Activated CD8-positive, alpha-beta T cell treated with anti-CD3 and anti-CD28 coated beads for 36 hours (primary cell): ENCODE measurements at regions of chr14 and their contacts with region 1.

Region 1: GRCh38 chr14:61360796-61361525 is 39.6 kb downstream of the PRKCH start:
- DNase-seq: peak; percentile 61
- ATAC-seq: peak; percentile 60
- H3K4me3 Mint-ChIP-seq: peak overlapping the region; percentile 20
- H3K27ac Mint-ChIP-seq: peak overlapping the region; percentile 83
- H3K4me1 Mint-ChIP-seq: peaks cover 52% of the 10 kb centered on the region
- H3K27me3 Mint-ChIP-seq: no peaks in the 10 kb centered on the region
- CTCF ChIP-seq: no peak

Region 2: GRCh38 chr14:61308198-61308597 is 52.8 kb before region 1 on chr14:
- CTCF ChIA-PET with region 1: no interaction called
- POLR2A ChIA-PET with region 1: no interaction called
- intact Hi-C with region 1: no loop called
- DNase-seq: no peak
- ATAC-seq: no peak
- H3K4me3 Mint-ChIP-seq: no peak overlapping the region
- H3K27ac Mint-ChIP-seq: no peak overlapping the region
- H3K4me1 Mint-ChIP-seq: peaks cover 20% of the 10 kb centered on the region
- H3K27me3 Mint-ChIP-seq: no peaks in the 10 kb centered on the region
- CTCF ChIP-seq: no peak

Region 3: GRCh38 chr14:61347826-61348443 is 13.0 kb before region 1 on chr14:
- CTCF ChIA-PET with region 1: interaction called, 11 read pairs
- POLR2A ChIA-PET with region 1: interaction called, 16 read pairs
- intact Hi-C with region 1: no loop called
- DNase-seq: peak; percentile 66
- ATAC-seq: peak; percentile 21
- H3K4me3 Mint-ChIP-seq: peak overlapping the region; percentile 80
- H3K27ac Mint-ChIP-seq: peak overlapping the region; percentile 98
- H3K4me1 Mint-ChIP-seq: peaks cover 96% of the 10 kb centered on the region
- H3K27me3 Mint-ChIP-seq: no peaks in the 10 kb centered on the region
- CTCF ChIP-seq: no peak

Region 4: GRCh38 chr14:61381547-61381946 is 20.6 kb after region 1 on chr14:
- CTCF ChIA-PET with region 1: interaction called, 10 read pairs
- POLR2A ChIA-PET with region 1: interaction called, 39 read pairs
- intact Hi-C with region 1: loop called (anchors 2 kb)
- DNase-seq: peak; percentile 37
- ATAC-seq: no peak
- H3K4me3 Mint-ChIP-seq: peak overlapping the region; percentile 54
- H3K27ac Mint-ChIP-seq: peak overlapping the region; percentile 83
- H3K4me1 Mint-ChIP-seq: peaks cover 64% of the 10 kb centered on the region
- H3K27me3 Mint-ChIP-seq: no peaks in the 10 kb centered on the region
- CTCF ChIP-seq: no peak

Region 5: DNA sequence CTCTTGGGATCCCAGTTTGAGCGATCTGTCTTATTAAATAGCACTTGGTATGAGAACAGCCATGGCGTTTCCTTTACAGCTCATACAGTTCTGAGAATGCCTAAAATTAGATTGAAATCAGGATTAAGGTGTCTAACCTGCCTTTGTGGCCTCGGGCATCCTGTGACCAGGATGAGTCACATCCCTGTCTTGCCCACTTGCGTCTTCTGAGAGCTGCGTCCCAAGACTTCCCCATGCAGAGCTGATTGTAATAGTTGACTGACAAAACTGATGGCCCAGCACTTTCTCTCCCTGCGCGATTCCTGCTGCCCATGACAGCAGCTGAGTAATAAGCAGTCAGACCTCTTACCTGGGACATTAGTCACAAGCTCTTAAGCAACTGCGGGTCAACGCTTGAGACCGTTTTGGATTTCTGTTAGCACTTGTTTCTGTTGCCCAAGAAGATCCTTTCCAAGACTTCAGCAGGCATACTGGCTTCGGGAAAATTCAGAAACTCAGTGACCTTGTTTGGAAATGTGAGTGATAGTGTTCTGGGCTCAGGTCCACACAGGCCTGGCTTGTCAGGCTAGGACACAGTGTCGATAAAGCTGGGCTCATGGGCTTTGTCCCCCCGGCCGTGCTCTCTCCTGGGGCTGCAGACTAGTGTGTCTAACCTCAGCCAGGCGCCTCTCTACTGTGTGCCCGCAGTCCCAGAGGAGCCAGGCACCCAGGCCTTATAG is 164.5 kb after region 1 on chr14:
- CTCF ChIA-PET with region 1: no interaction called
- POLR2A ChIA-PET with region 1: no interaction called
- intact Hi-C with region 1: no loop called
- DNase-seq: peak; percentile 89
- ATAC-seq: peak; percentile 77
- H3K4me3 Mint-ChIP-seq: peak overlapping the region; percentile 43
- H3K27ac Mint-ChIP-seq: peak overlapping the region; percentile 87
- H3K4me1 Mint-ChIP-seq: peaks cover 88% of the 10 kb centered on the region
- H3K27me3 Mint-ChIP-seq: no peaks in the 10 kb centered on the region
- CTCF ChIP-seq: no peak